ENCODE measurements at regions of chr3 and their contacts with region 1.

Region 1: GRCh38 chr3:55485211-55485791 is 1.8 kb downstream of the WNT5A start:
- DNase-seq: peak; percentile 81
- H3K4me3 Mint-ChIP-seq: peak overlapping the region; percentile 97
- H3K27ac Mint-ChIP-seq: peak overlapping the region; percentile 79
- H3K4me1 Mint-ChIP-seq: peaks cover 22% of the 10 kb centered on the region
- H3K27me3 Mint-ChIP-seq: no peaks in the 10 kb centered on the region
- CTCF ChIP-seq: peak; percentile 63

Region 2: DNA sequence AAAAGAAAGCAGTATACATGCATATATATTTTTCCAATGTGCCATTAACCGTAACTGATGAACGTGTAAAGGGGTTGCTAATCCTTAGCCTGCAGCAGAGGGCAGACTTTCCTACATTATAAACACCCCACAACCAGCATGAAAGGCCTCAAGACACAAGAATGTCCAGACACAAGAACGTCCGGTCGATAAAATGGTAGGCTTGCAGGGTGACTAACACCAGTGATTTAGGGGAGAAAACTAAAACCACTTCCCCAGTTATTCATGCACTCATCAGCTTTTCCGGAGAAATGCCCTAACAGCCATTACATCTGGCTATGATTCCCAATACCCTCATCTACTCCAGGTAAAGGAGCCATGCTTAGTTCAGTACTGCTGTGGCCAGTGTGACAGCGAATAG is 614.9 kb before region 1 on chr3:
- CTCF ChIA-PET with region 1: interaction called, 3 read pairs
- POLR2A ChIA-PET with region 1: no interaction called
- intact Hi-C with region 1: loop called (anchors 5 kb)
- DNase-seq: peak; percentile 77
- H3K4me3 Mint-ChIP-seq: no peak overlapping the region
- H3K27ac Mint-ChIP-seq: no peak overlapping the region
- H3K4me1 Mint-ChIP-seq: peaks cover 41% of the 10 kb centered on the region
- H3K27me3 Mint-ChIP-seq: no peaks in the 10 kb centered on the region
- CTCF ChIP-seq: peak; percentile 69

Region 3: GRCh38 chr3:55042591-55042990 is 442.7 kb before region 1 on chr3:
- CTCF ChIA-PET with region 1: no interaction called
- POLR2A ChIA-PET with region 1: no interaction called
- intact Hi-C with region 1: loop called (anchors 10 kb)
- DNase-seq: peak; percentile 26
- H3K4me3 Mint-ChIP-seq: no peak overlapping the region
- H3K27ac Mint-ChIP-seq: no peak overlapping the region
- H3K4me1 Mint-ChIP-seq: no peaks in the 10 kb centered on the region
- H3K27me3 Mint-ChIP-seq: no peaks in the 10 kb centered on the region
- CTCF ChIP-seq: peak; percentile 30

Region 4: DNA sequence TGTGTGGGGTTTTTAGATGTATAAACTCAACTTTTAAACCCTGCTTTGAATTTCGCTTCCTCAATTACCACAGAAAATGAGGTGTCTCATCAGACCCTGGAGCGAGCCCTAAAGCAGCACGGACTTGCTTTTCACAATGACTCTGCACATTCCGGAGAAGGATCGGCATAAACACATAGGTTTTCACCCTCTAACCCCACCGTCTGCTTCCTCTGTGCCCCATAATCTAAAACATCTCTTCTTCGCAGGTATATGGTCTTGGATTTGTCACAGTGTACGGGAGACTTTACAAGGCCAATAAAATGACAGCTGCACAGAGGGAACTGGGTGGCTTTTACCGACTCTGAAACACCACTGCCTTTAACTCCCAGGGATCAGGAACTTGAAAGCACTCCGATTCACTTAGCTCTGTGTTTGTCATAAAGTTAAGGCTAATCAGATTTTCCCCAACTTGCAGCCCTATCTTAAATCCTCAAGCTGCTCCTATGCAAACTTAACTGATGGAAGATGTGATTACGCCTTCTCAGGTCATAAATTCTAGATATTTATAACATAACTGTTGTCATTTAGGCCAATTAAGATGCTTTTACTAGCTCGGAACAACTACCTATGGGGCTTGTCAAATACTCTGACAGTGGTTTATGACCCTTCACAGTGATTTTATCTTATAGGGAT is 135.2 kb after region 1 on chr3:
- CTCF ChIA-PET with region 1: interaction called, 4 read pairs
- POLR2A ChIA-PET with region 1: no interaction called
- intact Hi-C with region 1: loop called (anchors 5 kb)
- DNase-seq: peak; percentile 42
- H3K4me3 Mint-ChIP-seq: no peak overlapping the region
- H3K27ac Mint-ChIP-seq: no peak overlapping the region
- H3K4me1 Mint-ChIP-seq: peaks cover 16% of the 10 kb centered on the region
- H3K27me3 Mint-ChIP-seq: no peaks in the 10 kb centered on the region
- CTCF ChIP-seq: no peak

Region 5: GRCh38 chr3:55746808-55747413 is 261.6 kb after region 1 on chr3:
- CTCF ChIA-PET with region 1: interaction called, 9 read pairs
- POLR2A ChIA-PET with region 1: interaction called, 10 read pairs
- intact Hi-C with region 1: loop called (anchors 2 kb)
- DNase-seq: peak; percentile 19
- H3K4me3 Mint-ChIP-seq: no peak overlapping the region
- H3K27ac Mint-ChIP-seq: no peak overlapping the region
- H3K4me1 Mint-ChIP-seq: peaks cover 7% of the 10 kb centered on the region
- H3K27me3 Mint-ChIP-seq: no peaks in the 10 kb centered on the region
- CTCF ChIP-seq: peak; percentile 30

Measured in MCF 10A (cell line).